ENCODE measurements at regions of chr1 and their contacts with region 1.

Region 1: DNA sequence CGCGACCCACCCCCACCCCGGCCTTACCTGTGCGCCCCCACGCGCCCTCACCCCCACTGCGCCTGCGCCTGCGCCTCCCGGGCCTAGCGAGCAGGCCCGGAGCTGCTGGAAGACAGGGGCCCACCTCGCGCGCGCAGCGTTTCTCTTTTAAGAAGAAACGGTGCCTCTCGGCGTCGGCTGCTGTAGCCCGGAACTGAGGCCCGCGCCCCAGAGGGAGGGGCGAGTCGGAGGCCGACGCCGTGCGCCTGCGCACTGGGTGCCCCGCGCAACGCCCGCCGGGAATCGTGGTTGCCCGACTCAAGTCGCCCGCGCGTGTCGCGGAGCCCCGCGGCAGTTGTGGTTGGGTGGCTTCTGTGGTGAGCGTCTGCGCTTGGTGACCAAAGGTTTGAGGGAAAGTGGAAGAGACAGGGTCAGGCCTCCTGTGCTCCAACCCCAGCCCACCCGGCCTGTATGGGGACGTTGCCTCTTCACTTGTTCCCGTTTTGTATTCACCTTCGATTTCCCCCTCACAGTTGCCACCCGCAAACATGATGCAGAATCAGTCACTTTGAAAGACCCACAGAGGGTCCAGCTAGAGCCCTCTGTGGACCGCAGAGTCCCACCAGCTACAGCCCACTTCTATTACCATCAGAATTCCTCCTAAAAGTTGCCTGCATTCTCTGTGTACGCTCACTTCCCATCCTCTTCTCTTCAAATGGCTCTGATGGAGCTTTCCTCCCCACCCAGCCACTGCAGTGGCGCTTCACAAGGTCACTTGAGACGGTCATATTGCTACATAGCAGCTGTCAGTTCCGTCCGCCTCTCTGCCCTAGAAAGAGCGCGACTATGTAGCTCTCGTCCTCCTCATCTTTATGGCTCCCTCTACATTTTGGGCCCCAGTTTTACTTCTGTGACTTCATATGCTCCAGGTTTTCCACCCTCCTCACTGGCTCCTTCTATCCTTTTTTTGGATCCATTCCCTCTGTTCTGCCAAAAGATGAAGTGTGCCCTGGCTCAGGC is at the start of gene ZNF692:
- DNase-seq: peak; percentile 85
- ATAC-seq: peak; percentile 86
- H3K4me3 ChIP-seq: peak within 1 kb of the TSS; percentile 95
- H3K27ac ChIP-seq: peak within 1 kb of the TSS; percentile 82
- H3K4me1 ChIP-seq: peaks cover 11% of the 10 kb centered on the region
- H3K27me3 ChIP-seq: no peaks in the 10 kb centered on the region
- CTCF ChIP-seq: no peak
- EP300 ChIP-seq: no peak
- POLR2A ChIP-seq: peak; percentile 91
- RAD21 ChIP-seq: no peak
- polyA plus RNA-seq, gene ZNF692: 5.3 to 18.5 TPM

Region 2: DNA sequence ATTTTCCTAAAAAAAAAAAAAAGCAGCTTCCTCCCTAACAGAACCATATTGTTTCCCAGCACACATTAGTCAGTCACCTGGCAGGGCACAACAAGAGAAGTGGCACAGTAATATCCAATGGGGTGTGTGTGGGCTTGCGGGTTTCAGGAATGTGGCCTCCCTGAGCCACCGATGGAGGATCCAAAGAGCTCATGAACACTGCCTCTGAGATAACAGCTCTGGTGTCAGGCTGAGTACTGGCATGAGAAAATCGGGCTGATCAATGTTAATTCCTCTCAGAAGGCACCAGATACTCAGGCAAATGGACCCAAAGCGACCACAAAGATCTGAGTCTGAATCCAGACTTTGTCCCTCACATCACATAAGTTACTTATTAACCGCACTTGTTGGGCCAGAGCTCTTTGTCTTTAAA is 101.4 kb before region 1 on chr1:
- CTCF ChIA-PET with region 1: no interaction called
- POLR2A ChIA-PET with region 1: no interaction called
- RAD21 ChIA-PET with region 1: no interaction called
- SMC1A ChIA-PET with region 1: no interaction called
- in situ Hi-C with region 1: no loop called
- intact Hi-C with region 1: no loop called
- DNase-seq: no peak
- ATAC-seq: no peak
- H3K4me3 ChIP-seq: no peak overlapping the region
- H3K27ac ChIP-seq: no peak overlapping the region
- H3K4me1 ChIP-seq: no peaks in the 10 kb centered on the region
- H3K27me3 ChIP-seq: no peaks in the 10 kb centered on the region
- CTCF ChIP-seq: no peak
- EP300 ChIP-seq: no peak
- POLR2A ChIP-seq: no peak
- RAD21 ChIP-seq: no peak

Region 3: DNA sequence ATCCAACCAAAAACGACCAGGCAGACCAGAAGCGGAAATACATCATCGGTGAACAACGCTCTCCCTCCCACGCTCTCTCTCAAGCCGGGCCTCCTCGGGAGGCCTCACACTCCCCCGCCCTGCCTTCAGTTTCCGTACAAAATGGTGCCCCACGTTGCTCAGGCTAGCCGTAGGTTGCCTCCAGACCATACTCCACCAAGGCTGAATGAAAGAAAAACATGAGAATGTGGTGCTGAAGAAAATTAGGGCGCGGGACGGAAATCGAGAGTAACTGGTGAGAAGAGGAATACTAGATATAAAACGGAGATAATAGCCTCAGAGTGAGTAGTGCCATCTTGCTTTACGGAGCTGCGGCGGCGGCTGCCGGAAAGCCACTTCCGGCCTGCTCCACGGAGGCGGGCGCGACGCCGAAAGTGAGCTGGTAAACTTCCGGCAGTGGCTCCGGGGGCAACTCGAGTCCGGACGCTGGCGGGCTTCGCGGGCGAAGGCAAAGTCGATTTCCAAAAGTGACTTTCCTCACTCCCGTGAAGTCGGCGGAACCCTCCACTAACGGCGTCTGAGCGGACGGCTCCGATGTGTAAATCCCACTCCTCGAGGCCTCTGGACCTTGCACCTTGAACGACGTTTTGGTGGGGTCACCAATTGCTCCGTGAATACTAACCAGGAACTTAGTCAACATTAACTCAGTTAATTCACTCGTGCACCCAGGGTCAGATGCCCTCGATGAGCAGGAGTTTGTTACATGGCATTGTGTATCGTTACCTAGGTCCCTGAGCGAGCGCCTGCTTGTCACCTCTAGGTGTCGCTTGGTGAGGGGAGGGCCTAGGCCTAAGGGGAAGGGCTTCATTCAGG is 33.1 kb before region 1 on chr1 and contains the start of gene SH3BP5L:
- CTCF ChIA-PET with region 1: interaction called, 16 read pairs
- POLR2A ChIA-PET with region 1: interaction called, 27 read pairs
- RAD21 ChIA-PET with region 1: interaction called, 14 read pairs
- SMC1A ChIA-PET with region 1: interaction called, 9 read pairs
- in situ Hi-C with region 1: no loop called
- intact Hi-C with region 1: loop called (anchors 2 kb)
- DNase-seq: peak; percentile 85
- ATAC-seq: peak; percentile 91
- H3K4me3 ChIP-seq: peak within 1 kb of the TSS; percentile 79
- H3K27ac ChIP-seq: peak within 1 kb of the TSS; percentile 98
- H3K4me1 ChIP-seq: peaks cover 13% of the 10 kb centered on the region
- H3K27me3 ChIP-seq: no peaks in the 10 kb centered on the region
- CTCF ChIP-seq: peak; percentile 83 to 89 (median 84); a peak in 5 of 6 replicates
- EP300 ChIP-seq: no peak
- POLR2A ChIP-seq: peak; percentile 82
- RAD21 ChIP-seq: peak; percentile 51; the same call in 1 of the 2 replicates
- polyA plus RNA-seq, gene SH3BP5L: 1.1 to 1.6 TPM

Measured in GM12878 (cell line).